Endothelial cell of umbilical vein (primary cell): ENCODE measurements at regions of chr2 and their contacts with region 1.

Region 1: GRCh38 chr2:64052468-64053241 is 33.4 kb upstream of the VPS54 start:
- DNase-seq: peak; percentile 94
- H3K4me3 ChIP-seq: peak overlapping the region in 1 of 3 experiments; percentile 20
- H3K27ac ChIP-seq: peak overlapping the region; percentile 96
- H3K4me1 ChIP-seq: peaks cover 28% of the 10 kb centered on the region
- H3K27me3 ChIP-seq: no peaks in the 10 kb centered on the region
- CTCF ChIP-seq: no peak
- POLR2A ChIP-seq: no peak

Region 2: GRCh38 chr2:64114063-64114911 is 61.6 kb after region 1 on chr2:
- CTCF ChIA-PET with region 1: interaction called, 6 read pairs
- POLR2A ChIA-PET with region 1: no interaction called
- dilution Hi-C with region 1: no loop called
- intact Hi-C with region 1: loop called (anchors 5 kb)
- DNase-seq: peak; percentile 69
- H3K4me3 ChIP-seq: no peak overlapping the region
- H3K27ac ChIP-seq: peak overlapping the region; percentile 7
- H3K4me1 ChIP-seq: peaks cover 35% of the 10 kb centered on the region
- H3K27me3 ChIP-seq: no peaks in the 10 kb centered on the region
- CTCF ChIP-seq: no peak
- POLR2A ChIP-seq: no peak

Region 3: GRCh38 chr2:64228126-64228678 is 175.5 kb after region 1 on chr2:
- CTCF ChIA-PET with region 1: interaction called, 13 read pairs
- POLR2A ChIA-PET with region 1: no interaction called
- dilution Hi-C with region 1: no loop called
- intact Hi-C with region 1: no loop called
- DNase-seq: peak; percentile 84
- H3K4me3 ChIP-seq: peak overlapping the region; percentile 32 to 72 (median 70)
- H3K27ac ChIP-seq: peak overlapping the region; percentile 10
- H3K4me1 ChIP-seq: peaks cover 9% of the 10 kb centered on the region
- H3K27me3 ChIP-seq: no peaks in the 10 kb centered on the region
- CTCF ChIP-seq: no peak
- POLR2A ChIP-seq: peak; percentile 42

Region 4: GRCh38 chr2:64260817-64261216 is 208.2 kb after region 1 on chr2:
- CTCF ChIA-PET with region 1: interaction called, 15 read pairs
- POLR2A ChIA-PET with region 1: no interaction called
- dilution Hi-C with region 1: no loop called
- intact Hi-C with region 1: loop called (anchors 2 kb)
- DNase-seq: peak; percentile 82
- H3K4me3 ChIP-seq: peak overlapping the region in 1 of 3 experiments; percentile 2
- H3K27ac ChIP-seq: peak overlapping the region; percentile 99
- H3K4me1 ChIP-seq: peaks cover 44% of the 10 kb centered on the region
- H3K27me3 ChIP-seq: no peaks in the 10 kb centered on the region
- CTCF ChIP-seq: no peak
- POLR2A ChIP-seq: peak; percentile 48

Region 5: DNA sequence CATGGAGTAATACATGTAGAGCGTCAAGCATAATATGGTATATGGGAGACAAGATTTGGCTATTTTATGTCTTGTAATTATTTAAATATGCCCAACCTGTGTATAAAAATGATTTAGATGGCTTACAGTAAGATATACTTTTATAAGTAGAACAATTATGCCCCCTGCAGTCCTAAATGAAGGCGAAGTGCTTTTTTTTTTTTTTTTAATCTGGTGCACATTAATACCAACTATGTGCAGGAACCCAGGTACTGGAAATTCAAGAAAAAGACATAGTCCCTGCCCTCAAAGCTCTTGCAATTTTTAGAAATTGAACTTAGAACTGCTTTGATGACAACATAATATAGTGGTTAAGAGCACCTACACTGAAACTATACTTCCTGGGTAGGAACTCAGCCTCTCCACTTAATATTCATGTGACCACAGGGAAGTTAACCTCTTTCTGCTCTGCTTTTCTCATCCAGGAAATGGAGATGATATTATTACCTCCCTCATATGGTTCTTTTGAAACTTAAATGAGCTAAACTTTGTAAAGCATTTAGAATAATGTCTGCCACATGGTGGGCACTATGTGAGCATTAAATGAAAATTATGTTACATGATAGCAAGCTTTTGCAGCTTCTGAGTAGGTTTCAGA is 509.6 kb after region 1 on chr2:
- CTCF ChIA-PET with region 1: interaction called, 11 read pairs
- POLR2A ChIA-PET with region 1: no interaction called
- dilution Hi-C with region 1: no loop called
- intact Hi-C with region 1: loop called (anchors 1 kb)
- DNase-seq: peak; percentile 57
- H3K4me3 ChIP-seq: no peak overlapping the region
- H3K27ac ChIP-seq: no peak overlapping the region
- H3K4me1 ChIP-seq: no peaks in the 10 kb centered on the region
- H3K27me3 ChIP-seq: no peaks in the 10 kb centered on the region
- CTCF ChIP-seq: peak; percentile 7 to 10
- POLR2A ChIP-seq: no peak